ENCODE measurements at regions of chr1 and their contacts with region 1.

Region 1: GRCh38 chr1:172719694-172720138 is 60.8 kb downstream of the FASLG start:
- DNase-seq: peak; percentile 37
- H3K4me3 ChIP-seq: no peak overlapping the region
- CTCF ChIP-seq: peak; percentile 69

Region 2: DNA sequence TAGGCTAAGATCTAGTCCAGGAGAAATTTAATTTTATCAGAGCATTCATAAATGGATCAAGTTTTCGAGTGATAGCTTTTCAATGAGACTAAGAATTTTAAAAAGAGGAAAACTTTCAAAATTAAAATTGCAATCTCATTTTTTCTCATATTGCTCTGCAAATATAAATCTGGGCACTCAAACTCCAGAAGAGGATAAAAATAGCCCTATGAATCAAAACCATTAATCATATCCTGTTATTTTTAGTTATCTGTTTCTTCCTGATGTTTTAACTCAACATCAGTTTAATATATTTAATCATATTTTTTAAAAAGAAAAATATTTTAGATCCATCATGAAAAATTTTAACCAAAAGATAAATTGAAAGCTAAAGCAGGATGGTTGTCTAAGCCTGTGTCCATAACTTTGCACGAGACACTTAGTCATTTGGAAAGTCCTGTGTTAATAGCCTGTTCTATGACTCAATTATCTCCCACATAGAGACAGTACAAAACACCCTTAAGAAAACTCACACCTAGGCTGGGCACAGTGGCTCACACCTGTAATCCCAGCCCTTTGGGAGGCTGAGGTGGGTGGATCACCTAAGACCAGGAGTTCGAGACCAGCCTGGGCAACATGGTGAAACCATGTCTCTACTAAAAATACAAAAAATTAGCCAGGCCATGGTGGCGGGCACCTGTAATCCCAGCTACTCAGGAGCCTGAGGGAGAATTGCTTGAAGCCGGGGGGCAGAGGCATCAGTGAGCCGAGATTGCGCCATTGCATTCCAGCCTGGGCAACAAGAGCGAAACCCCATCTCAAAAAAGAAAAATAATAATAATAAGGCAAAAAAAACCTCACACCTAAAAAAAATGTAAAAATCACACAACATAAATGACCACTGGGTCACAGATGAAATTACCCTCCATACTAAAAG is 1251.3 kb before region 1 on chr1:
- in situ Hi-C with region 1: no loop called
- DNase-seq: no peak
- H3K4me3 ChIP-seq: no peak overlapping the region
- CTCF ChIP-seq: no peak

Region 3: GRCh38 chr1:172443626-172444453 is 275.9 kb before region 1 on chr1 and contains the start of gene PIGC:
- in situ Hi-C with region 1: loop called (anchors 10 kb)
- DNase-seq: peak; percentile 66
- H3K4me3 ChIP-seq: peak within 1 kb of the TSS; percentile 79
- CTCF ChIP-seq: peak; percentile 95

Region 4: DNA sequence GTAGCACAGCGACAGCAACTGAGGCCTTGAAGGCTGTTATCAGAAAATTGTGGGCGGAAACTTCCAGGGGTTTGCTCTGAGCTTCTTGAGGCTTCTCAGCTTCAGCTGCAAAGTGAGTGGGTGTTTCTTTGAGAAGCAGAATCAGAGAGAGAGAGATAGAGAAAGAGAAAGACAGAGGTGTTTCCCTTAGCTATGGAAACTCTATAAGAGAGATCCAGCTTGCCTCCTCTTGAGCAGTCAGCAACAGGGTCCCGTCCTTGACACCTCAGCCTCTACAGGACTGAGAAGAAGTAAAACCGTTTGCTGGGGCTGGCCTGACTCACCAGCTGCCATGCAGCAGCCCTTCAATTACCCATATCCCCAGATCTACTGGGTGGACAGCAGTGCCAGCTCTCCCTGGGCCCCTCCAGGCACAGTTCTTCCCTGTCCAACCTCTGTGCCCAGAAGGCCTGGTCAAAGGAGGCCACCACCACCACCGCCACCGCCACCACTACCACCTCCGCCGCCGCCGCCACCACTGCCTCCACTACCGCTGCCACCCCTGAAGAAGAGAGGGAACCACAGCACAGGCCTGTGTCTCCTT is 60.8 kb before region 1 on chr1 and contains the start of gene FASLG:
- in situ Hi-C with region 1: no loop called
- DNase-seq: no peak
- H3K4me3 ChIP-seq: no peak within 1 kb of the TSS
- CTCF ChIP-seq: no peak

Region 5: DNA sequence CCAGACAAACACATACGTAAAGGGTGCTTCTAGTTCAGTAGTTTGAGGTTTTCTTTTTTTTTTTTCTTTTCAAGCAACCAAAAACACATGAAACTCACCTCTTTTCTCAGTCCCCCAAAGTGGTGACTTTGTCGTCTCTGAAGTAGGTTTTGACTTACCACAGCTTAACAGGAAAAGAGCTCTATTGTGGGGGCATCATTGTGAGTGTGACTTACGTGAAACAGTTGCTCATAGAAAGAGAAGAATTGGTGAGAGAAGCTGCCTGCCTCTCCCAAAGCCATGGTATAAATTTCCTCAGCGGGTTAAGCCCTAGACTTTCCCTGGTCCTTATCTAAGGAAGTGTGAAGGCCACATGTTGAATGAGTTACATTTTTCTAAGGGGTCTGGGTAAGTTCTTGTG is 48.9 kb before region 1 on chr1:
- in situ Hi-C with region 1: loop called (anchors 10 kb)
- DNase-seq: no peak
- H3K4me3 ChIP-seq: no peak overlapping the region
- CTCF ChIP-seq: no peak

Measured in astrocyte of the cerebellum (primary cell).